Dendritic cell treated with granulocyte-macrophage colony-stimulating factor and Interleukin-4, amounts not matched to agents 40 ng/mL and 50 ng/mL, for 4 days (primary cell): ENCODE measurements at regions of chr21 and their contacts with region 1.

Region 1: DNA sequence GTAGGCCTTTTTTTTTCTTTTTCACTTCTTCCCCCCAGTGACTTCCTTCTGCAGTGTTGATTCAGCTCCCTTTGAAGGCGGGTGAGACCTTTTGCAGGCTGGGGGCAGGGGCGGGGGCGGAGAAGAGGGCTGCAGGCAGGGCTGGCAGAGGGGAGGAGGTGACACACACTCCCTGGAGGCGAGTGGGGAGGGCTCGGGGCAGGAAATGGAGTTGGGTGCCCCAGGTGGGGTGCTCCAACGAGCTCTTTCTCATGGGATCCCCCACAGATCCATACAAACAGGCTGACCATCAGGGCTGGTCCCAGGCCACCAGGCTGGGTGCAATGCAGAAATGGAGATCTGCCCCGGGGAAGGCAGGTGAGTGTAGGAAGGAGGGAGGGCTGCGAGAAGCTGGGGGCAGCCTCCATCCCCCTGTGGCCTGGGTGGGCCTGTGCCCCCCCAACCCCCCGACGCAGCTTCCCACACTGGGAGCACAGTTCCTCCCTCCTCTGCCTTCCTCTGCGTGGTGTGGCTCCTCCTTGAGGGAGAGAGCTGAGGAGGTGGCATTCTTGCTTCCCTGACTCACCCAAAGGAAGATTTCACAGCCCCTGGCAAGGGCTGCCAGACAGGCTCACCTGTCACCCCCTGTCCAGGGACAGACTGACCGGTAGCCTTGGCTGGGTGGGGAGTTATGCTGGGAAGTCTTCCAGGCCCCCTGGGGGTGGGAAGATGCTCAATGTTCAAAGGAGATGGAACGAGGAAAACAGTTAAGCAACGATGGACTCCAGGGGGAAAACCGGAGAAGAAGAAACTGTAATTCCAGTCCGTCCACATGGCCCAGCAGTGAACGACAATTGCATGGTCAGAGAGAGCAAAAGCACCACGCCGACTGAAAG is 7.1 kb upstream of the ITGB2 start:
- H3K4me3 Mint-ChIP-seq: peak overlapping the region; percentile 80
- H3K27ac Mint-ChIP-seq: peak overlapping the region; percentile 86
- H3K4me1 Mint-ChIP-seq: peaks cover 83% of the 10 kb centered on the region
- H3K27me3 Mint-ChIP-seq: no peaks in the 10 kb centered on the region

Region 2: DNA sequence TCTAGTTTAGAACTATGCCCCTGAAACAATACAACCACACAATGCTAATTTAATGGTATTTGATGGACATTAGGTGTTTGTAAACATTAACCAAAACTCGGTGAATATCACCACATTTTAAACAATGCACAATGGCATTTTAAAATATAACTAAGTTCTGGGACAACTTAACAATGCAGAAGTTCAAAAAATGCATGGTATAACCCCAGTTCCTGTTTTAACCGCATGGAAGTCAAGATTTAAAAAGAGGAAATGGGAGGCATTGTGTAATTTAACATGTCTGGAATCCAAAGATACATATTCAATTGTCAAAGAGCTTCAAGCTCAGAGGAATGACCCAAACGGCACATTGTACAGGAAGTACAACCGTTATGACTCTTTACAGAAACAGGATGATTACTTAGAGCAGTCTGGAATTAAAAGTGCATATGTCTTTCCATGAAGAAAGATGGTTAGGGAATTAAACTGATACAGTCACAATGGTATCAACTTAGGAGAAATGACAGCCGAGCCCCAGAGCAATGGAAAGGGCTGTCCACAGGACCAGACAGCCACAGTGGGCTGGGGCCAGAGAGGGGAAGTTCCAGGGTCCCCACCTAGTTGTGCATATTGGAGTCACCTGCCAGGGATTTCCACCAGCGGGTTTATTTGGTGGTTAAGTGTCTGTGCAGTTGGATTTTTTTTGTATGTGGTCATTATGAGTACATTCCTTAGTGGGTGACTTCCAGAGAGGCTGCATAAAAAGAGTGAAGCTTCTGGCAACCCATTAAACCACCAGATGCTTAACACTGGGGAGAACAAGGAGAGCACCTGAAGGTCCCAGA is 46.9 kb before region 1 on chr21:
- intact Hi-C with region 1: loop called (anchors 5 kb)
- H3K4me3 Mint-ChIP-seq: peak overlapping the region; percentile 55
- H3K27ac Mint-ChIP-seq: peak overlapping the region; percentile 100
- H3K4me1 Mint-ChIP-seq: peaks cover 78% of the 10 kb centered on the region
- H3K27me3 Mint-ChIP-seq: no peaks in the 10 kb centered on the region

Region 3: GRCh38 chr21:44897326-44898010 is 30.4 kb before region 1 on chr21:
- intact Hi-C with region 1: loop called (anchors 5 kb)
- H3K4me3 Mint-ChIP-seq: peak overlapping the region; percentile 21
- H3K27ac Mint-ChIP-seq: peak overlapping the region; percentile 60
- H3K4me1 Mint-ChIP-seq: peaks cover 81% of the 10 kb centered on the region
- H3K27me3 Mint-ChIP-seq: no peaks in the 10 kb centered on the region

Region 4: DNA sequence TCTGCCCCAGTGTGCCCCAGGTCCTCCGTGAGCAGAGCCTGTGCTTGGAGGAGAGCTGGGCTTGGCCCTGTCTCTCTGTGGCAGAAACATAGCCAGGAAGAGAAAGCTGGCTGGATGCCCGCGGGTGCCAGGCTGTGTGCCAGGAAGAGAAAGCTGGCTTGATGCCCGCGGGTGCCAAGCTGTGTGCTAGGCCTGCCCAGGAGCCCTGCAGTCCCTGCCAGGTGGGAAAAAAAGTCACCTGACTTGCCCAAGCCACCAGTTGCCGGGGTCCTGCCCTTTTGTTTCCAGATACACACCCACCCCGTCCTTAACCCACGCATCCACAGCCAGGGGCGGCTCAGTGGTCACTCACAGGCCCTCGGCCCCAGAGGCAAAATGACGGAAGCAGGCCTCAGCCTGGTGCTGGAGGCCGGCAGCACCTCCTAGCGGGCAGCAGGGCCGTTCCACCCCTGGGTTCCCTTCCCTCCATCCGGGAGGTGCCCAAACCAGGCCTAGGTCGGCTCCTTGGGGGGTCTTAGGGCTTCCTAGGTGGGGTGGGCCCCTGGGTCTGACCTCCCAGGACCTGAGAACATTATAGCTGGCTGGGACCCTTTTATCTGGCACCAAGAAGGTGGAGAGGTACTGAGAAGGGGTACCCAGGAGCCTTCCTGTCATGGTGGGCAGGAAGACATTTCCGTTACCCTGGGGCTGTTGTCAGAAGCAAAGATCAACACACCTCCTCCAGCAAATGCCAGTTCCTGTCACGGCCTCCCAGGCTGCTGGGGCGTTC is 16.3 kb before region 1 on chr21:
- intact Hi-C with region 1: no loop called
- H3K4me3 Mint-ChIP-seq: peak overlapping the region; percentile 65
- H3K27ac Mint-ChIP-seq: peak overlapping the region; percentile 79
- H3K4me1 Mint-ChIP-seq: peaks cover 95% of the 10 kb centered on the region
- H3K27me3 Mint-ChIP-seq: no peaks in the 10 kb centered on the region